Activated CD4-positive, alpha-beta T cell treated with anti-CD3 and anti-CD28 coated beads, Interleukin-2, amount 10 ng/mL, durations not matched to agents 7 days and 5 days (primary cell): ENCODE measurements at regions of chr11 and their contacts with region 1.

Region 1: DNA sequence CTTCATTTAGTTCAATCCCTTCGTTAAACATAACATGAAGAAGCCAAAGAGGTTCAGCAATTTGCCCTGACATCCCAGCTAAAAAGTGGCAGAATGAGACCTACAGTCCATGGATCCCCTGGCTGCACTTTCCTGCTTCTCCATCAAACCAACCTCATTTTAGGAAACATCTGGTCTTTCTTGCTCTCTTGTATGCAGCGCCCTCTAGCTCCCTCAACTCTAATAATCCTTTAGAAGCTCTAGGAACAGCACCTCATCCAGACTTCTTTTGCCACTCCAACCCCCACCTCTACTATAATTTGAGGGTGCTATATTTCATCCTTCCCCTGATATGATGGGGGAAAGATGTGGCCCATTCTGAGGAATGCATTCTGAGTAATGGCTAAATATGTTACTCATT is 7.4 kb downstream of the CNTF start:
- DNase-seq: peak; percentile 18
- H3K4me3 Mint-ChIP-seq: no peak overlapping the region
- H3K27ac Mint-ChIP-seq: no peak overlapping the region
- H3K4me1 Mint-ChIP-seq: no peaks in the 10 kb centered on the region
- H3K27me3 Mint-ChIP-seq: no peaks in the 10 kb centered on the region

Region 2: GRCh38 chr11:58617976-58618557 is 11.8 kb before region 1 on chr11:
- CTCF ChIA-PET with region 1: interaction called, 13 read pairs
- POLR2A ChIA-PET with region 1: no interaction called
- DNase-seq: no peak
- H3K4me3 Mint-ChIP-seq: no peak overlapping the region
- H3K27ac Mint-ChIP-seq: no peak overlapping the region
- H3K4me1 Mint-ChIP-seq: peaks cover 27% of the 10 kb centered on the region
- H3K27me3 Mint-ChIP-seq: no peaks in the 10 kb centered on the region

Region 3: GRCh38 chr11:58671983-58672633 is 42.3 kb after region 1 on chr11:
- CTCF ChIA-PET with region 1: interaction called, 4 read pairs
- POLR2A ChIA-PET with region 1: interaction called, 11 read pairs
- DNase-seq: no peak
- H3K4me3 Mint-ChIP-seq: no peak overlapping the region
- H3K27ac Mint-ChIP-seq: no peak overlapping the region
- H3K4me1 Mint-ChIP-seq: no peaks in the 10 kb centered on the region
- H3K27me3 Mint-ChIP-seq: no peaks in the 10 kb centered on the region

Region 4: DNA sequence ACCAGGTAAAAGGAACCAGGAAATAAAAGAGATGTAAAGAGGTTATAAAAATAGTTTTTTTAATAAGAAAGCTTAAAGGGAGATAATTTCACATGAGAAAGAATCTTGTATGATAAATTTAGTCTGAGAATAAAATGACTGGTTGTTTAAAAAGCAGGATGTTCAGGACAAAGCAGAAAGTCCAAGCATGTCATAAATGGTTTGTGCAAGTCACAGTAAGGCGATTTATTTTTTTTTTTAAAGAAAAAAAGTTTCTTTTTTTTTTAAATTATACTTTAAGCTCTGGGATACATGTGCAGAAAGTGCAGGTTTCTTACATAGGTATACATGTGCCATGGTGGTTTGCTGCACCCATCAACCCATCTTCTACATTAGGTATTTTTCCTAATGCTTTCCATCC is 183.8 kb after region 1 on chr11:
- CTCF ChIA-PET with region 1: no interaction called
- POLR2A ChIA-PET with region 1: no interaction called
- DNase-seq: no peak
- H3K4me3 Mint-ChIP-seq: no peak overlapping the region
- H3K27ac Mint-ChIP-seq: no peak overlapping the region
- H3K4me1 Mint-ChIP-seq: no peaks in the 10 kb centered on the region
- H3K27me3 Mint-ChIP-seq: peaks cover 2% of the 10 kb centered on the region

Region 5: GRCh38 chr11:58837707-58838388 is 208.0 kb after region 1 on chr11:
- CTCF ChIA-PET with region 1: no interaction called
- POLR2A ChIA-PET with region 1: no interaction called
- DNase-seq: no peak
- H3K4me3 Mint-ChIP-seq: no peak overlapping the region
- H3K27ac Mint-ChIP-seq: no peak overlapping the region
- H3K4me1 Mint-ChIP-seq: no peaks in the 10 kb centered on the region
- H3K27me3 Mint-ChIP-seq: no peaks in the 10 kb centered on the region